ENCODE measurements at regions of chr6 and their contacts with region 1.

Region 1: DNA sequence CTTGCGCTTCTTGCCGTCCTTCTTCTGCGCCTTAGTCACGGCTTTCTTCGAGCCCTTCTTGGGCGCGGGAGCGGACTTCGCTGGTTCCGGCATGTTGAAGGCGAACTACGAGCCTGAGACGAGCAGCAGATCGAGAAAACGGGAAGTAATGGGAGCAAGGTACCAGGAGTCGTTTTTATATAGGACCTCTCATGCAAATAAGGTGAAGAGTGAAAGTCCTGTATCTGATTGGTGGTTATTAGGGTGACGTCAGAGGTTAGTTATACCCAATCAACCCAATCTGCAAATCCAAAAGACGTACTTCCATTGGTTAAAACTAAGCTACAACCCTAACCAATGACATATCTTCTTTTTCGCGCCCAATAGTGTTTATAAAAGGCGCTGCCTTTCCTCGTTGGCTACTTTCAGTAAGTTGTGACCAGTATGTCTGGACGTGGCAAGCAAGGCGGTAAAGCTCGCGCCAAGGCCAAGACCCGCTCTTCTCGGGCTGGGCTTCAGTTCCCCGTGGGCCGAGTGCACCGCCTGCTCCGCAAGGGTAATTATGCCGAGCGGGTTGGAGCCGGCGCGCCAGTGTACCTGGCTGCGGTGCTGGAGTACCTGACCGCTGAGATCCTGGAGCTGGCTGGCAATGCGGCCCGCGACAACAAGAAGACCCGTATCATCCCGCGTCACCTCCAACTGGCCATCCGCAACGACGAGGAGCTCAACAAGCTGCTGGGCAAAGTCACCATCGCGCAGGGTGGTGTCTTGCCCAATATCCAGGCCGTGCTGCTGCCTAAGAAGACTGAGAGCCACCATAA is 100.6 kb upstream of the PRSS16 start:
- DNase-seq: peak; percentile 100
- H3K4me3 ChIP-seq: peak overlapping the region; percentile 88
- CTCF ChIP-seq: no peak

Region 2: GRCh38 chr6:27126815-27127537 is 19.9 kb before region 1 on chr6:
- CTCF ChIA-PET with region 1: interaction called, 34 read pairs
- POLR2A ChIA-PET with region 1: interaction called, 152 read pairs
- DNase-seq: peak; percentile 38
- H3K4me3 ChIP-seq: peak overlapping the region; percentile 52
- CTCF ChIP-seq: peak; percentile 72

Region 3: DNA sequence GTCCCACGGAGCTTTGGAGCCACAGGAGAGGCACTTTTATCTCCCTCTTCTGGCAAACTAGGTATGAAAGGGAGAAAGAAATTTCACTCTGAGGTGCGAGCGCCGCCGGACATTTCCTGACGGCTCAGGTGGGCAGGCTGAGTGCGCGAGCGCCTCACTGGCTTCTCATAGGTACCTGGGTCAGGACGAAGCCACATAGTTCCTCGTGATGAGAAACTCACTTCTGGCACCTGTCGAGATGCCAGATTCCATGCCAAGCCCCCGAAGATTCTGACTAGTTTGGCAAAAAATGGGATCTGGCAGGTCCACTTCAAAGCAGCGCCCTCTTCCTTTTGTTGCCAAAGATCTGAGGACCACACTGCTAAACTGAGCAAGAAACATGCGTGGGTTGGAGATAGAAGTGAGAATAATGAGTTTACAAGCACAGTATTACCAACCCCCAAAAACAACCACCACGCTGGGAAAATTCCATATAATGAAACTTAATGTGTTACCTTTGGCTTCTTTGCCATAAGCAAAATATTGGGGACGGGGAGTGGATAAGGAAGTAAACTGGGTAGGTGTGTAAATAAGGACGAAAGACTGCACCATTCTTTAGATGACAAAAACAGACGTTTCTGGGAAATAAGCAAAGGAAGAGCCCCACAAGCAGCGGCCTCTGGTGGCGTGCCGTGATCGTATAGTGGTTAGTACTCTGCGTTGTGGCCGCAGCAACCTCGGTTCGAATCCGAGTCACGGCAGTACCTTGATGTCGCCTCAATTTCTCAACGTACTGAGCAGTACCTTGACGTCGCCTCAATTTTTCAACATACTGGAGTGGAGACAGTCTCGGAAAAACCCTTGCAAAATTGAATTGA is 10.8 kb after region 1 on chr6:
- CTCF ChIA-PET with region 1: interaction called, 38 read pairs
- POLR2A ChIA-PET with region 1: no interaction called
- DNase-seq: peak; percentile 40
- H3K4me3 ChIP-seq: peak overlapping the region; percentile 59
- CTCF ChIP-seq: peak; percentile 50

Region 4: GRCh38 chr6:27809939-27810767 is 663.2 kb after region 1 on chr6:
- CTCF ChIA-PET with region 1: no interaction called
- POLR2A ChIA-PET with region 1: interaction called, 60 read pairs
- DNase-seq: peak; percentile 91
- H3K4me3 ChIP-seq: peak overlapping the region; percentile 85
- CTCF ChIP-seq: peak; percentile 29

Region 5: DNA sequence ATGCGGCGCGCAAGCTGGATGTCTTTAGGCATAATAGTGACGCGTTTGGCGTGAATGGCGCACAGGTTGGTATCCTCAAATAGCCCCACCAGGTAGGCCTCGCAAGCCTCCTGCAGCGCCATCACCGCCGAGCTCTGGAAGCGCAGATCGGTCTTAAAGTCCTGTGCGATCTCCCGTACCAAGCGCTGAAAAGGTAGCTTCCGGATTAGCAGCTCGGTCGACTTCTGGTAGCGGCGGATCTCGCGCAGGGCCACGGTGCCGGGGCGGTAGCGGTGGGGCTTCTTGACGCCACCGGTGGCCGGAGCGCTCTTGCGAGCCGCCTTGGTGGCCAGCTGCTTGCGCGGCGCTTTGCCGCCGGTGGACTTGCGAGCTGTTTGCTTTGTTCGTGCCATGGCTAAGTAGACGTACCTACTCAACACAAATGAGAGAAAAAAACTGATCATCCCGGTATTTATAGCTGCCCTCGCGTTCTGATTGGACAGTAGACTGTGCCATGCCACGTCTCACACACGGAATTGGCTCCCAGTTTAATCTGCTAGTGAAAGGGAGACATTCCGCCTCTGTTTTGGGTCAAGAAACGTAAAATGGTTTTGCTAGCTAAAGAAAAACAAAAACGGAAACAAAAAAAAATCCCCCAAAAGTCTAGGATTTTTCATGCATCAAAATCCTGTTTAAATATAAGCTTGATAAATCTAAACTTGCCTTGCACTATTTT is 725.2 kb after region 1 on chr6:
- CTCF ChIA-PET with region 1: no interaction called
- POLR2A ChIA-PET with region 1: interaction called, 11 read pairs
- DNase-seq: peak; percentile 88
- H3K4me3 ChIP-seq: peak overlapping the region; percentile 66
- CTCF ChIP-seq: peak; percentile 36

Measured in AG04449 (cell line).